ENCODE measurements at regions of chr14 and their contacts with region 1.

Region 1: DNA sequence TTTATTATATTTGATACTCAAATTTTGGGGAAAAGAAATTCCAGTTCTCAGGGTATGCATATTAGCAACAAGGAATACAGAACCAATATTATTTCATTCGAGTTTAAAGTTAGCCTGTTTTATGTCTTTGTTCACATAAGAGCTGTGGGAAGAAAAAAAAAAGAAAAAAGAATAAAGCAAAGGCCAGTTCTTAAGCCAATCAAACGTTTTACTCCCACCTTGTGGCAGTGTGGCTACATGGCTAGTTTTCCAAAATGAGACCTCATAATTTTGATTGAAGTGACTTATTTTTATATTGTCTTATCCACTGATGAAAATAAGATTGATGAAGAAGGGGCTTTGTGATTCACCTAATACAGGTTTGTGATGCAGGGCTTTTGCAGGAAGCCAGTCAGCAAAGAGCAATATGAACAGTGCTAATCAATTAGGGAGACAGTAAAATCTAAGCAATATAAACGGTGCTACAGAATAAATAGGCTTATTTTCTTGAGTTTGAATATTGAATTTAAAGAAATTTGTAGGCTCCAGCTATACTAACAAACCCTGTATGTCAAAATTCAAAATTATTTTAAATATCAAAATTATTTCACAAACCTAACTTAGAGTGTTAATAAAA is 624.1 kb upstream of the FOXG1 start:
- DNase-seq: peak in 1 of 2 experiments; percentile 18
- H3K4me3 ChIP-seq: no peak overlapping the region
- H3K4me3 Mint-ChIP-seq: no peak overlapping the region
- H3K27ac Mint-ChIP-seq: no peak overlapping the region
- H3K4me1 ChIP-seq: 0 out of 2 replicates have a peak, but pooled peaks cover 12% of the 10 kb centered on the region
- H3K4me1 Mint-ChIP-seq: peaks cover 6% of the 10 kb centered on the region
- H3K27me3 ChIP-seq: no peaks in the 10 kb centered on the region
- H3K27me3 Mint-ChIP-seq: no peaks in the 10 kb centered on the region
- CTCF ChIP-seq: peak; percentile 43 to 70

Region 2: DNA sequence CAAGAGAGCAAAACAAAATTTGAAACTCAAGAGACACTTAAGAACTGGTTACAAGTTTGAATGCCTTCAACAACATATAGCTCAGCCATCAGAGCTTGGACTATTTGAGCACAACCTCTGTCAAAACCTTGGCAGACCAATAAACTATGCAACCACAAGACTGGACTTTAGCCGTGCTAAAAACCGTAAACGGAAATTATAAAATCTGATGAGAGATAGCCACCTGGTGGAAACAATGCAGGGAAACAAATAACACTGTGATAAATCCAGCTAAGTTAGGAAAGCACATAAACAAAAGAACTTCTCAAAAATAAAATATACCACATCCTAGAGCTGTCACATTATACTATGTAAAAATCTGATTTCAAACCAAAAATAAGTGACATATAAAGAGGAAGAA is 470.5 kb before region 1 on chr14:
- CTCF ChIA-PET with region 1: no interaction called
- POLR2A ChIA-PET with region 1: no interaction called
- intact Hi-C with region 1: loop called (anchors 5 kb)
- DNase-seq: peak in 1 of 2 experiments; percentile 8
- H3K4me3 ChIP-seq: no peak overlapping the region
- H3K4me3 Mint-ChIP-seq: peak overlapping the region; percentile 94
- H3K27ac Mint-ChIP-seq: peak overlapping the region; percentile 15
- H3K4me1 ChIP-seq: 0 out of 2 replicates have a peak, but pooled peaks cover 3% of the 10 kb centered on the region
- H3K4me1 Mint-ChIP-seq: peaks cover 13% of the 10 kb centered on the region
- H3K27me3 ChIP-seq: no peaks in the 10 kb centered on the region
- H3K27me3 Mint-ChIP-seq: no peaks in the 10 kb centered on the region
- CTCF ChIP-seq: peak; percentile 22 to 31

Region 3: GRCh38 chr14:28157887-28158791 is 15.6 kb after region 1 on chr14:
- CTCF ChIA-PET with region 1: no interaction called
- POLR2A ChIA-PET with region 1: no interaction called
- intact Hi-C with region 1: no loop called
- DNase-seq: no peak
- H3K4me3 ChIP-seq: no peak overlapping the region
- H3K4me3 Mint-ChIP-seq: no peak overlapping the region
- H3K27ac Mint-ChIP-seq: no peak overlapping the region
- H3K4me1 ChIP-seq: no peaks in the 10 kb centered on the region
- H3K4me1 Mint-ChIP-seq: peaks cover 16% of the 10 kb centered on the region
- H3K27me3 ChIP-seq: no peaks in the 10 kb centered on the region
- H3K27me3 Mint-ChIP-seq: no peaks in the 10 kb centered on the region
- CTCF ChIP-seq: no peak

Region 4: GRCh38 chr14:28196878-28197277 is 54.4 kb after region 1 on chr14:
- CTCF ChIA-PET with region 1: no interaction called
- POLR2A ChIA-PET with region 1: no interaction called
- intact Hi-C with region 1: no loop called
- DNase-seq: no peak
- H3K4me3 ChIP-seq: no peak overlapping the region
- H3K4me3 Mint-ChIP-seq: no peak overlapping the region
- H3K27ac Mint-ChIP-seq: no peak overlapping the region
- H3K4me1 ChIP-seq: no peaks in the 10 kb centered on the region
- H3K4me1 Mint-ChIP-seq: no peaks in the 10 kb centered on the region
- H3K27me3 ChIP-seq: no peaks in the 10 kb centered on the region
- H3K27me3 Mint-ChIP-seq: no peaks in the 10 kb centered on the region
- CTCF ChIP-seq: no peak

Region 5: GRCh38 chr14:28468191-28469151 is 326.0 kb after region 1 on chr14:
- CTCF ChIA-PET with region 1: no interaction called
- POLR2A ChIA-PET with region 1: no interaction called
- intact Hi-C with region 1: no loop called
- DNase-seq: no peak
- H3K4me3 ChIP-seq: no peak overlapping the region
- H3K4me3 Mint-ChIP-seq: no peak overlapping the region
- H3K27ac Mint-ChIP-seq: no peak overlapping the region
- H3K4me1 ChIP-seq: no peaks in the 10 kb centered on the region
- H3K4me1 Mint-ChIP-seq: no peaks in the 10 kb centered on the region
- H3K27me3 ChIP-seq: no peaks in the 10 kb centered on the region
- H3K27me3 Mint-ChIP-seq: no peaks in the 10 kb centered on the region
- CTCF ChIP-seq: no peak

Measured in Caco-2 (cell line).